Transverse colon (tissue), 4 donors: ENCODE measurements at regions of chr6 and their contacts with region 1.

Region 1: GRCh38 chr6:64325093-64325492 is 689.5 kb downstream of the PHF3 start:
- DNase-seq: no peak
- H3K4me3 ChIP-seq: no peak overlapping the region
- H3K27ac ChIP-seq: no peak overlapping the region
- H3K4me1 ChIP-seq: no peaks in the 10 kb centered on the region
- H3K27me3 ChIP-seq: no peaks in the 10 kb centered on the region
- CTCF ChIP-seq: no peak
- EP300 ChIP-seq: no peak
- POLR2A ChIP-seq: no peak

Region 2: GRCh38 chr6:63910863-63911551 is 414.1 kb before region 1 on chr6:
- in situ Hi-C with region 1: no loop called
- intact Hi-C with region 1: loop called (anchors 10 kb)
- DNase-seq: no peak
- H3K4me3 ChIP-seq: no peak overlapping the region
- H3K27ac ChIP-seq: no peak overlapping the region
- H3K4me1 ChIP-seq: no peaks in the 10 kb centered on the region
- H3K27me3 ChIP-seq: no peaks in the 10 kb centered on the region
- CTCF ChIP-seq: no peak
- EP300 ChIP-seq: no peak
- POLR2A ChIP-seq: no peak

Region 3: GRCh38 chr6:63923139-63923739 is 401.9 kb before region 1 on chr6:
- in situ Hi-C with region 1: loop called in 3 of 4 experiments (anchors 10 kb)
- intact Hi-C with region 1: loop called (anchors 10 kb)
- DNase-seq: no peak
- H3K4me3 ChIP-seq: no peak overlapping the region
- H3K27ac ChIP-seq: no peak overlapping the region
- H3K4me1 ChIP-seq: peaks cover 0 to 17% (median 4%) of the 10 kb centered on the region in 4 donors
- H3K27me3 ChIP-seq: no peaks in the 10 kb centered on the region
- CTCF ChIP-seq: peak; percentile 57 to 70 (median 60)
- EP300 ChIP-seq: no peak
- POLR2A ChIP-seq: no peak

Region 4: DNA sequence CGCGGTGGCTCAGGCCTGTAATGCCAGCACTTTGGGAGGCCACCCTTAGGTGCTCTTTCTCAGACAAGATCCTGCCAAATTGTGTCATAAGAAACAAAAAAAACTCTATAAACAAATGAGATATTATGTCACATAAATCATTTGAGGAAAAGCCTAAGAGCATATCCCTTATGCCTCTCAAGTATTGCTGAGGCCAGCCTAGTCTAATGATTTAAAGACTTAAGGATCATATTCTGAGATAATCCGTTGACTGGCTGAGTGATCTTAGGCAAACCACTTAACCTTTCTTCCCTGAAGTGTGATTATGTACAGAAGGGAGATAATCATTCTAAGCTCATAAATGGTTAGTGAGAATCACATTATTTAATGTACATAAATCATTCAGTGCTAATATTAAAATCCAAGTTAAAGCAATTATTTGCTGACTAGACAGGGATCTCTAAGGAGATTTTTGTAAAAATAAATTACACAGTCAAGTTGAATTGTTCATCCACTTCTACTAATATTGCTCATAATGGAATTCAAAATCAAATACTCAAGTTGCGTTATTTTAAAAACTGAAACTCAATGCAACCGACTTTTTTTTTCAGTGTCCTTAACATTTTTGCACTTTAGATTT is 324.1 kb before region 1 on chr6:
- in situ Hi-C with region 1: loop called in 3 of 4 experiments (anchors 10 to 25 kb)
- intact Hi-C with region 1: no loop called
- DNase-seq: no peak
- H3K4me3 ChIP-seq: no peak overlapping the region
- H3K27ac ChIP-seq: no peak overlapping the region
- H3K4me1 ChIP-seq: no peaks in the 10 kb centered on the region
- H3K27me3 ChIP-seq: no peaks in the 10 kb centered on the region
- CTCF ChIP-seq: no peak
- EP300 ChIP-seq: no peak
- POLR2A ChIP-seq: no peak

Region 5: GRCh38 chr6:64012351-64013001 is 312.6 kb before region 1 on chr6:
- in situ Hi-C with region 1: loop called (anchors 10 to 25 kb)
- intact Hi-C with region 1: no loop called
- DNase-seq: peak; percentile 34
- H3K4me3 ChIP-seq: no peak overlapping the region
- H3K27ac ChIP-seq: no peak overlapping the region
- H3K4me1 ChIP-seq: peaks cover 0 to 6% (median 0%) of the 10 kb centered on the region in 4 donors
- H3K27me3 ChIP-seq: no peaks in the 10 kb centered on the region
- CTCF ChIP-seq: peak; percentile 41 to 63 (median 57)
- EP300 ChIP-seq: no peak
- POLR2A ChIP-seq: no peak

Region 6: DNA sequence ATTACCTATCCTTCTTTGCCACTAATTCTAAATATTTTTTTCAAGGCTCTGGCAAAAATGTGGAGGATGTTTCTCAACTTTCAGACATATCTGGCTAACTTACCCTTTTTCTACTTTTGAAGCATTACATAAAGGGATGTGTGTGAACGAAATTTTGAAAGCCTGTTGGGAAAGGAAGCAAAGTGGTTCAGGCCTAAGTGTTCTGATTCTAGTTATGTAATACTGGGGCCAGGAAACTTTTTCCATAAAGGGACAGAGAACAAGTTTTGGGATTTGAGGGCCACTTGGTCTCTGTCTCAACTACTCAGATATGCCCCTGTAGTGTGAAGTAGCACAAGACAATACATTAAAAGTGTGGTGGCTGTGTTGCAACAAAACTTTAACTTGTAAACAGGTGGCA is 32.3 kb after region 1 on chr6:
- in situ Hi-C with region 1: no loop called
- intact Hi-C with region 1: loop called (anchors 1 kb)
- DNase-seq: no peak
- H3K4me3 ChIP-seq: no peak overlapping the region
- H3K27ac ChIP-seq: no peak overlapping the region
- H3K4me1 ChIP-seq: no peaks in the 10 kb centered on the region
- H3K27me3 ChIP-seq: no peaks in the 10 kb centered on the region
- CTCF ChIP-seq: no peak
- EP300 ChIP-seq: no peak
- POLR2A ChIP-seq: no peak

Region 7: GRCh38 chr6:64415926-64416325 is 90.8 kb after region 1 on chr6:
- in situ Hi-C with region 1: no loop called
- intact Hi-C with region 1: no loop called
- DNase-seq: no peak
- H3K4me3 ChIP-seq: no peak overlapping the region
- H3K27ac ChIP-seq: no peak overlapping the region
- H3K4me1 ChIP-seq: no peaks in the 10 kb centered on the region
- H3K27me3 ChIP-seq: no peaks in the 10 kb centered on the region
- CTCF ChIP-seq: no peak
- EP300 ChIP-seq: no peak
- POLR2A ChIP-seq: no peak